ENCODE measurements at regions of chr19 and their contacts with region 1.

Region 1: DNA sequence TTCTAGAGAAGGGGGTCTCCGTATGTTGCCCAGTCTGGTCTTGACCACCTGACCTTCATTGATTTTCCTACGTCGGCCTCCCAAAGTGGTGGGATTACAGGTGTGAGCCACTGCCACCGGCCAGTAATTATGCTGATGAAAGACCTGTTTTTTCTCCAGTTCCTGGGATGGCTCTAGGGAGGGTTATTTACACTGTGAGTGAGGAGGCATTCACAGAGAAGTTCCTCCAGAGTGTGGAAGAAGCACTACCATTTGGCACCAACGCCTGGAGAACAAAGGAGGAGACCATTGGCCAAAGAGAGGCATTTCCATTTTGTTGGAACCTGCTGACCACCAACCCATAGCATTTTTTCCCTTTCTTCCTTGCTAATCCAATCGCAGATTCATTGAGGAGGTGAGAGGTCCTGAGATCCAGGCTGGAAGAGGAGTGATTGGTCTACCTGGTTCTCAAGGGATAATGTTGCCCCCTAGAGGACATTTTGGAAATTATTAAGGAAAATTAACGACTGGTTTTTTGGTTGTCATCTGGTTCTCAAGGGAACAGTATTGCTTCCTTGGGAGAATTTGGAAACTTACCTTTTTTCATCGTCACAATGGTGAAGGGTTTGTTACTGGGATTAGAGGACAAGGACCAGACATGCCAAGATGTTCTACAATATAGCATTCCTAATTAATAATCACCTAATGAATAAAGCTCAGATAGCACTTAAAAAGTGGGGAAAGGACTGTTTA is 5.5 kb upstream of the SAE1 start:
- DNase-seq: no peak
- H3K4me3 ChIP-seq: no peak overlapping the region
- H3K27ac ChIP-seq: no peak overlapping the region
- H3K4me1 ChIP-seq: peaks cover 0 to 11% (median 4%) of the 10 kb centered on the region in 6 donors
- H3K27me3 ChIP-seq: no peaks in the 10 kb centered on the region
- CTCF ChIP-seq: peak; percentile 40 to 86 (median 68)
- POLR2A ChIP-seq: no peak

Region 2: DNA sequence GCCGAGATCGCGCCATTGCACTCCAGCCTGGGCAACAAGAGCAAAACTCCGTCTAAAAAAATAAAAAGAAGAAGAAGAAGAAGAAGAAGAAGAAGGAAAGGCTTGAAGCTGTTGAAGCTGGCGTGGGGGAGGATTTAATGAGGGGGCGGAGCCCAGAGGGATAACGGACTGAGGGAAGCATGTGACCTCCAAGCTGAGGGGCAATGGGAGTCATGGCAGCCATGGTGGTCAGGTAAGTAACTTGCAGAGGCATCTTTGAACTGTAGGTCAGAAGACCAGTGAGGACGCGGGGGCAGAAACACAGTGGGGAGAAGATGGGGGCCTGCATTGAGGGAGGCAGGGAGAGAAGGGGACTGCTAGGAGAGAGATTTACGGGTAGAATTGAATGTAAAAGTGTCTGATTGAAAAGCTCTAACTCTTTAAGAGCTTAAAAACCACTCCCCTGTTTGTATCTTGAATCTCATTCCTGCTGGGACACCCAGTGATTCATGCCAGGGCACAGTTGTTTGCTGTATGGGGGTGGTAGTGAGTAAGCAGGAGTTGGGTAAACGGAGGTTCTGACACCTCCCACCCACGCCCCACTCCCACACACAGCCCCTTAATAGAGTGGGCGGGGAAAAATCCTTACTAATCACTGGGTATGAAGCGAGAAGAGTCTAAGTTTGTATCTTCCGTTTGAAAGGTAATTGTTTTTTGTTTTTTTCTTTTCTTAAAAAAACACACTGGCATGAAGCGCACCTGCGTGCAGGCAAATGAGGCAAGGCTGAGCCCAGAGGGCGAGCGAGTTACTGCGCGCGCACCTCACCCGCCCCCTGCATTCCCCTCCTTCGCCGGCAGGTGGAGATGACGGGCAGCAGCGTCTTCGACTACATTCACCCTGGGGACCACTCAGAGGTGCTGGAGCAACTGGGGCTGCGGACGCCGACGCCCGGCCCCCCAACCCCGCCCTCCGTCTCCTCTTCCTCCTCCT is 89.7 kb before region 1 on chr19:
- intact Hi-C with region 1: loop called (anchors 10 kb)
- DNase-seq: peak; percentile 97
- H3K4me3 ChIP-seq: peak overlapping the region; percentile 12 to 69 (median 34)
- H3K27ac ChIP-seq: peak overlapping the region in 5 of 8 donors; percentile 20 to 60 (median 45)
- H3K4me1 ChIP-seq: peaks cover 7 to 32% (median 14%) of the 10 kb centered on the region in 6 donors
- H3K27me3 ChIP-seq: peaks cover 0 to 48% (median 13%) of the 10 kb centered on the region in 7 donors
- CTCF ChIP-seq: peak; percentile 97 to 99 (median 99)
- POLR2A ChIP-seq: no peak

Region 3: GRCh38 chr19:47075179-47075810 is 49.8 kb before region 1 on chr19:
- intact Hi-C with region 1: loop called (anchors 2 kb)
- DNase-seq: peak; percentile 89
- H3K4me3 ChIP-seq: no peak overlapping the region
- H3K27ac ChIP-seq: peak overlapping the region in 3 of 8 donors; percentile 30 to 55 (median 38)
- H3K4me1 ChIP-seq: peaks cover 0 to 52% (median 23%) of the 10 kb centered on the region in 6 donors
- H3K27me3 ChIP-seq: no peaks in the 10 kb centered on the region
- CTCF ChIP-seq: no peak
- POLR2A ChIP-seq: no peak

Region 4: DNA sequence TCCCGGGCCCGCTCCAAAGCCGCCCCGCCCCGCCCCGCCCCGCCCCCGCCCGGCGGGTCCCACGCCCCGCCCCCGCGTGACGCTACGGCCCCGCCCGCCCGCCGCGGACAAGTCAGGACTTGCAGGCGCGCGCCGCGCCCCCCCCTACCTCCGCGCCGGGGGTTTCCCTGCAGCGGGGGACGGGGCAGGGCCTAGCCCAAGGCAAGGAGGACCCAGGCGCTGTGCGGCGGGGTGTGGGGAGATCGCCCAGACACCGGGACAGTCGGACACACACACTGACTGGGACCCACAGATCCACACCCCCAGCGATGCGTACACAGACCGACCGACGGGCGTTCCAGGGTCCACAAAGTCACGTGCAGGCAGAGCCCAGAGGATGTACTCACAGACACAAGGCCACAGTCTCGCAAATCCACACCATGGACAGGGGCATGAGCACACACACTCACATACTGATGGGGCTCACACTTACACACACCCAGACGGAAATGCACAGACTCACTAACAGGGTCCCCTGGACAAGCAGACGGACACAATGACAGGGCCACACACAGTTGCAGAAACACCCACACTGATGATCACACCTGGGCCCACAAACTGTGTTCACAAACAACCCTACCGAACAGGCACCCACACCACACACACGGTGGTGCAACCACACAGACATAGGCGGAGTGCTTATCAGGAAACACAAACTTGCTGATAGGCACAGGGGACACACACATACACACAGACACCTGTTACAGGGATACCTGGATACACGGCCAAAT is 106.3 kb after region 1 on chr19:
- intact Hi-C with region 1: no loop called
- DNase-seq: peak; percentile 98
- H3K4me3 ChIP-seq: peak overlapping the region; percentile 12 to 99 (median 97)
- H3K27ac ChIP-seq: peak overlapping the region in 7 of 8 donors; percentile 61 to 99 (median 98)
- H3K4me1 ChIP-seq: peaks cover 28 to 62% (median 55%) of the 10 kb centered on the region in 6 donors
- H3K27me3 ChIP-seq: peaks cover 0 to 14% (median 0%) of the 10 kb centered on the region in 7 donors
- CTCF ChIP-seq: no peak
- POLR2A ChIP-seq: peak in 1 of 3 donors; percentile 14